ENCODE measurements at regions of chr7 and their contacts with region 1.

Region 1: DNA sequence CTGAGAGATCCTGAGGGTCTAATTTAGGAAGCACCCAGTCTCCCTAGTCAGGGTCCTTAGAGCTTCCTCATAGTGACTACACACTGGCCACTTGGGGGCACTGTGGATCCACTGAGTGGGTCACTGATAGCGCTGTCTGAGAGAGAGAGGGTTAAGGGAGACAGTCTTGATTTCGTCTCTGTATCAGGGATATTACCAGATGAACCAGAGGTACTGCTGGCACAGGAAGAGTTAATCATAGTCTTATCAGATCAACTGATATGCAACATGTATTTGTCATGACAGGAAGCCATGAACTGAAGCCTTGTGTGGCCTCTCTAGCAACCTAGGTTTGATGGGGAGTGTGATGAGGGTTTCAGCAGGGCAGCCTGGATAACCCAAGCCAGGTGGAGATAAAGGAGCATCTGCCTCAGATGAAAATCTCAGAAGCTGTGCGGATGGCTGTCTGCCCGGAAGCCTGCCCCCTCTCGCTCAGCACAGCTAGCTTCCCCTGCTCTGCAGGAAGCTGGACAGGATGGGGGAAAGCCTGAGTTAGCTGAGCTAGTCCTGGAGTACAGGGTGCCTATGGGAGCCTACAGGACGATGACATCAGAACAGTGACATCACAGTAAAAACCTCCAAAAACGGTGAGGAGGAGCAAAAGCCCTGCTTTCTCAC is 214.0 kb upstream of the PRSS1 start:
- DNase-seq: peak; percentile 81
- H3K4me3 Mint-ChIP-seq: peak overlapping the region; percentile 56
- H3K27ac Mint-ChIP-seq: peak overlapping the region; percentile 76
- H3K4me1 Mint-ChIP-seq: peaks cover 33% of the 10 kb centered on the region
- H3K27me3 Mint-ChIP-seq: peaks cover 9% of the 10 kb centered on the region

Region 2: GRCh38 chr7:142523821-142524460 is 11.3 kb before region 1 on chr7:
- CTCF ChIA-PET with region 1: interaction called, 26 read pairs
- POLR2A ChIA-PET with region 1: no interaction called
- DNase-seq: no peak
- H3K4me3 Mint-ChIP-seq: no peak overlapping the region
- H3K27ac Mint-ChIP-seq: no peak overlapping the region
- H3K4me1 Mint-ChIP-seq: peaks cover 17% of the 10 kb centered on the region
- H3K27me3 Mint-ChIP-seq: peaks cover 6% of the 10 kb centered on the region

Region 3: GRCh38 chr7:142581346-142581745 is 46.1 kb after region 1 on chr7:
- CTCF ChIA-PET with region 1: interaction called, 10 read pairs
- POLR2A ChIA-PET with region 1: no interaction called
- DNase-seq: peak; percentile 48
- H3K4me3 Mint-ChIP-seq: peak overlapping the region; percentile 50
- H3K27ac Mint-ChIP-seq: peak overlapping the region; percentile 87
- H3K4me1 Mint-ChIP-seq: peaks cover 38% of the 10 kb centered on the region
- H3K27me3 Mint-ChIP-seq: no peaks in the 10 kb centered on the region

Measured in activated CD4-positive, alpha-beta T cell treated with anti-CD3 and anti-CD28 coated beads, Interleukin-2, amount 10 ng/mL, durations not matched to agents 7 days and 5 days (primary cell).